HAP-1 (cell line): ENCODE measurements at regions of chr1 and their contacts with region 1.

Region 1: DNA sequence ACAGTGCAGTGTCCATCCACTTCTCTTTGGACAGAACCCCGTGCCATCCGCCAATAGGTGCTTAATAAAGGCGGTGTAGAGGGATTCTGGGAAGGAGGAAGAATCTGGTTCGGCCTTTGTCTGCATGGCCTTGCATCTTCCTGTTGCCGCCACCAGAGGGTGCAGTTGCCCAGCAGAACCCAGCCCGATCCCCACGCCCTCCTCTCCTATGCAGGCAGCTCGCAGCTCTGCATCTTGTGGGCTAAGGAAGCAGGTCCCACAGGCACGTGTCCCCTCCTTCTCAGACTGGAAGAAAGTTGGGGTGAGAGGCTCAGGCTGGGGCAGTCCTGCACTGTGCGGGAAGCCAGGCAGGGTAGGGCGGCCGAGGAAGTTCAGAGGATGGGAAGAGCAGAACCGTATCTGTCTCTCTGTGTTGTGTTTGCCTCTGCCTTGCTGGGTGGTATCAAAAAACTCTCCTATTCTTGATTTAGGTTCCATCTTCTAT is 20.8 kb downstream of the NAV1 start:
- DNase-seq: peak; percentile 82 to 87
- H3K4me3 ChIP-seq: no peak overlapping the region
- H3K4me1 ChIP-seq: peaks cover 3% of the 10 kb centered on the region; the same call in 1 of the 2 replicates
- H3K27me3 ChIP-seq: no peaks in the 10 kb centered on the region

Region 2: GRCh38 chr1:201792534-201793305 is 233.0 kb after region 1 on chr1:
- in situ Hi-C with region 1: loop called (anchors 5 kb)
- DNase-seq: peak; percentile 76 to 83
- H3K4me3 ChIP-seq: no peak overlapping the region
- H3K4me1 ChIP-seq: 0 out of 2 replicates have a peak, but pooled peaks cover 2% of the 10 kb centered on the region
- H3K27me3 ChIP-seq: no peaks in the 10 kb centered on the region